BJ (cell line): ENCODE measurements at regions of chr22 and their contacts with region 1.

Region 1: DNA sequence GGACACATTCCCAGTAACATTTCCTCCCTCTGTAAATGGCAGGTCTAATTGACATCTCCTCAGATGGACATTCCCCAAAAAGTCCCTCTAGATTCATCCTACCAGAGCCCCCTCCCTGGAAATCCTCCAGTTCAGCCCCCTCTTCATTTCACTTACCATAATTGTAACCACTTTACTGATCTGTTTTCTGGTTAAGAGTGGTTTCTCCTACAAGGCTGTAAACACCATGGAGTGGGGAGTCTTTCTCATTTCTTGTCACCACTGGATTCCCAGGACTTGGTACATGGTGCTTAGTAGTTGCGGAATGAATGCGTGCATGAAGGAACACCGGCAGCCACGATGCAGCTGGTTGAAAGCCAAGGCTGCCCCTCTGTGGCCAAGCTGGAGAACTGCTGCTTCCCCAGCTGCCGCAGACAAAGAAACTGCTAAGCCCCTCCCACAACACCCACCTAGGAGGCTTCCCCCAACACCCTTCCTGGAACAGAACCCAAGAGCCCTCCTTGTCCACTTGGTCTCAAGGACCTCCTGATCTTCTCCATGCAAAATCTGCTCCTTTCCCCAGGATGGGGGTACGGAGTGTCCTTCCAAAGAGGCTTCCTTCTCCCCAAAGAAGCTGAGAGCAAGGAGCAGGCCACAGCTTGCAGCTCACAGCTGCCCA is 18.6 kb upstream of the SCARF2 start:
- DNase-seq: no peak
- H3K4me3 ChIP-seq: no peak overlapping the region
- H3K27me3 ChIP-seq: no peaks in the 10 kb centered on the region
- CTCF ChIP-seq: peak; percentile 94

Region 2: GRCh38 chr22:20405931-20406685 is 50.1 kb before region 1 on chr22:
- CTCF ChIA-PET with region 1: interaction called, 16 read pairs
- POLR2A ChIA-PET with region 1: interaction called, 10 read pairs
- DNase-seq: no peak
- H3K4me3 ChIP-seq: no peak overlapping the region
- H3K27me3 ChIP-seq: no peaks in the 10 kb centered on the region
- CTCF ChIP-seq: no peak

Region 3: GRCh38 chr22:20418211-20418788 is 37.9 kb before region 1 on chr22:
- CTCF ChIA-PET with region 1: interaction called, 88 read pairs
- POLR2A ChIA-PET with region 1: interaction called, 4 read pairs
- DNase-seq: no peak
- H3K4me3 ChIP-seq: peak overlapping the region; percentile 43
- H3K27me3 ChIP-seq: 0 out of 2 replicates have a peak, but pooled peaks cover 2% of the 10 kb centered on the region
- CTCF ChIP-seq: peak; percentile 87

Region 4: DNA sequence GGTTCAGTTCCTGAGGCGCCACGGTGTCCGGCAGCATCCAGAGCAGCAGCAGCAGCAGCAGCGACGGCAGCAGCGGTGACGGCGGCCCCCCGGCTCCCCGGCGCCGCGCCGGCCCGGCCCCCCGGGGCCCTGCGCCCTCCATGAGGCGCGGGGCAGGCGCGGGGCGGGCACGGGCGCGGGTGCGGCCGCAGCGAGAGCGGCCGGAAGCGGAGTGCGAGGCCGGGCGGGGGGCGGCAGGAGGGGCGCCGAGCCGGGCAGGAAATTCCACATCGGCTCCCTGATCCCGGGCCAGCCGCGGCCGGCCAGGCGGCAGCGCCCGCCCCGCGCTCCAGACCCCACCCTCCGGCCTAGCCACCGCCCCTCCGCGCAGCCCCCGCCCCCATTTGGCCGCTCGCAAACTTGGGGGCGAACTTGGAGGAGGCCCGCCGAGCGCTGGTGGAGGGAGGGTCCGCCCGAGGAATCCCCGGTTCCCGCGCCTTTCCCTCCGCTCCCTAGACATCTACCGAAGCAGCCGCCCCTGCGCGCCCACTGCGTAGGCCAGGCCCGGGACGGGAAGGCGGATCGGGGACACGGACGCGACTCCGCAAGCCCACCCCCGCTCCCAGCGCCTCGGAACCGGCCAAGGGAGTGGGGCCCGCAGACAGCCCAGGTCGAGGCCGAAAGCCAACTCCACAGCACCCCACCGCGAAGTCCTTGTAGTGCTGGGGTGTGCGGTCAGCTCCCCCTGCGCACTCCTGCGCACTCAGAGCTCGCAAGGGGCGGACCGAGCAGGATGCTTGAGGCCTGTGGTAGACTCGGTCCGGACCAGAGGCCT is 18.4 kb before region 1 on chr22 and contains the start of gene SCARF2:
- CTCF ChIA-PET with region 1: interaction called, 14 read pairs
- POLR2A ChIA-PET with region 1: no interaction called
- DNase-seq: no peak
- H3K4me3 ChIP-seq: peak within 1 kb of the TSS; percentile 72
- H3K27me3 ChIP-seq: no peaks in the 10 kb centered on the region
- CTCF ChIP-seq: no peak
- polyA plus RNA-seq, gene SCARF2: 15.3 and 28.8 TPM in 2 replicates

Region 5: GRCh38 chr22:20469110-20469868 is 13.1 kb after region 1 on chr22:
- CTCF ChIA-PET with region 1: interaction called, 10 read pairs
- POLR2A ChIA-PET with region 1: no interaction called
- DNase-seq: no peak
- H3K4me3 ChIP-seq: no peak overlapping the region
- H3K27me3 ChIP-seq: no peaks in the 10 kb centered on the region
- CTCF ChIP-seq: no peak

Region 6: GRCh38 chr22:20507253-20508066 is 51.3 kb after region 1 on chr22 and contains the start of gene MED15:
- CTCF ChIA-PET with region 1: no interaction called
- POLR2A ChIA-PET with region 1: no interaction called
- DNase-seq: no peak
- H3K4me3 ChIP-seq: peak within 1 kb of the TSS; percentile 87
- H3K27me3 ChIP-seq: no peaks in the 10 kb centered on the region
- CTCF ChIP-seq: no peak
- polyA plus RNA-seq, gene MED15: 24.2 and 42.7 TPM in 2 replicates